H1 (cell line): ENCODE measurements at regions of chr20 and their contacts with region 1.

Region 1: GRCh38 chr20:49384437-49385088 is 97.9 kb downstream of the KCNB1 start:
- DNase-seq: peak; percentile 71 to 98
- H3K4me3 ChIP-seq: no peak overlapping the region
- H3K27ac ChIP-seq: no peak overlapping the region
- H3K4me1 ChIP-seq: peaks cover 2 to 8% (median 4%) of the 10 kb centered on the region in 4 experiments; a peak in 4 of 7 replicates
- H3K27me3 ChIP-seq: no peaks in the 10 kb centered on the region; a peak in 1 of 7 replicates
- CTCF ChIP-seq: peak; percentile 77 to 92 (median 89)
- EP300 ChIP-seq: no peak
- POLR2A ChIP-seq: no peak
- RAD21 ChIP-seq: peak; percentile 53 to 71

Region 2: DNA sequence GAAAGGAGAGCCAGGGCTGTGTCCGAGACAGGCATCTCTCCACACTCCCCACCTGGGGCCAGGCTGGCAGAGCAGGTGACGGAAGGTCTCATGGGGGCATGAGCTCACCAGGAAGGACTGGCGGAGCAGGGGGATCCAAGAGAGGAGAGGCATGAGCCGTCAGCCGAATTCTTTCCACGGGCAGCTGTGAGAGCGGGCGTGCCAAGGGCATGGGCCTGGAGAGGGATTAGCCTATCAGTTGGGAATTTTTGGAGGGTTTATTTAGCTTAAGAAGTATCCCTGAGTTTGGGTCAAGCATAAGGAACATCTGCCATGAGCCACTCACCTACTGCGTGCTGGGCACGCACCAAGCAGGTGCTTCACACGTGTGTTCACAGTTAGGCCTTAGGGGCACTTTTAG is 46.5 kb before region 1 on chr20:
- CTCF ChIA-PET with region 1: interaction called, 57 read pairs
- POLR2A ChIA-PET with region 1: interaction called, 3 read pairs
- DNase-seq: no peak
- H3K4me3 ChIP-seq: no peak overlapping the region
- H3K27ac ChIP-seq: no peak overlapping the region
- H3K4me1 ChIP-seq: no peaks in the 10 kb centered on the region
- H3K27me3 ChIP-seq: no peaks in the 10 kb centered on the region
- CTCF ChIP-seq: no peak
- EP300 ChIP-seq: no peak
- POLR2A ChIP-seq: no peak
- RAD21 ChIP-seq: no peak

Region 3: GRCh38 chr20:49367113-49367512 is 17.4 kb before region 1 on chr20:
- CTCF ChIA-PET with region 1: interaction called, 11 read pairs
- POLR2A ChIA-PET with region 1: interaction called, 4 read pairs
- DNase-seq: no peak
- H3K4me3 ChIP-seq: no peak overlapping the region
- H3K27ac ChIP-seq: no peak overlapping the region
- H3K4me1 ChIP-seq: no peaks in the 10 kb centered on the region; a peak in 1 of 7 replicates
- H3K27me3 ChIP-seq: 0 out of 7 replicates have a peak, but pooled peaks cover 0 to 1% (median 0%) of the 10 kb centered on the region in 4 experiments
- CTCF ChIP-seq: no peak
- EP300 ChIP-seq: no peak
- POLR2A ChIP-seq: no peak
- RAD21 ChIP-seq: no peak

Region 4: DNA sequence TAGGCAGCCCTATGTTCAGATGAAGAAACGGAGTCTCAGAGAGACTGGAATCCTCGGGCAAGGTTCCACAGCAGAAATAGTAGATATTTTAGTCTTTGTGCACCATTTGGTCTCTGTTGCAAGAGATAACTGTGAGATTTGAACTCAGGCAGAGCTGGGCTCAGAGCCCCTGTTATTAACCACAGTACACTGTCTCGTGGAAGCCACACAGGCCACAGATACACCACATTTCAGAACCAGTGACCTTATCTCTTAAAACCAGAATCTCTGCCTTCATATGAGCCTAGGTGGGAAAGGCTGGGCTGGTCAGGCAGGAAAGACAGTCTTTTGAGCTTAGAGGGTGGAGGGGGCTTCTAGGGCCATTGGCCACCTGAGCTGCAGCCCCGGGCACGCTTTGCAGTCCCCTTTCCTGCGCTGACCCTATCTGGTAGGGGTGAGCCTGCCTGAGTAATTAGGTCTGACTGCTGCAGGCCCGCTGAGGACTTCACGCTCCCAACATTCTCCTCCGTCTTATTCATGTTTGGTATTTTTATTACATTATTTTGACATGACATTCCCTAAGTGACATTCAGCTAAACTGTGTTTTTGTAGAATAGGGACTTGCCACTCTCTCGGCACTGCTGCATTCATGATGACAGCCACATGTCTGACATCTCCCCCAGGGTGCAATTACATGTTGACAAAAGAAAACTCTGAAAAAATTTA is 26.8 kb after region 1 on chr20:
- CTCF ChIA-PET with region 1: interaction called, 29 read pairs
- POLR2A ChIA-PET with region 1: no interaction called
- DNase-seq: no peak
- H3K4me3 ChIP-seq: no peak overlapping the region
- H3K27ac ChIP-seq: no peak overlapping the region
- H3K4me1 ChIP-seq: no peaks in the 10 kb centered on the region
- H3K27me3 ChIP-seq: no peaks in the 10 kb centered on the region
- CTCF ChIP-seq: no peak
- EP300 ChIP-seq: no peak
- POLR2A ChIP-seq: no peak
- RAD21 ChIP-seq: no peak

Region 5: DNA sequence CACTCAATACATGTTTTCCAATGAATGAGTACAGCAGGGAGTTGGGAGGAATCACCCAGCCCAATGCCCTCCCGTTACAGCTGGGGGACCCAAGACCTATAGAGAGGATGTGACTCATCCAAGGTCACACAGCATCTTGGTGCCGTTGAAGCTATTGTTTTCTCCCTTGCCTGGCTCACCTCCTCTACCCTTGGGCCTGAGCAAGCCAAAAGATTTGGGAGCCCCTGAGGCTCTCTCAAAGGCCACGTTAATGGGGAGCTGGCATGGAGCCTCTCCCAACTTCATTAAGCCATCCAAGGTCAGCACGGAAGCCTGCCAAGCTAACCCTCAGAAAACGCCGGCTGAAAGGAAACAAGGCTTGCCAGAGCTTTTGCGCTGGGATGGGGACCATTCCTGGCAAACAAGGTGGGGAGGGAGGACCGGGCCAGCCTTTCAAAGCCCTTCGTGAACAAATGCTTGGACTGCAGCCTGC is 67.5 kb after region 1 on chr20:
- CTCF ChIA-PET with region 1: interaction called, 15 read pairs
- POLR2A ChIA-PET with region 1: no interaction called
- DNase-seq: no peak
- H3K4me3 ChIP-seq: no peak overlapping the region
- H3K27ac ChIP-seq: no peak overlapping the region
- H3K4me1 ChIP-seq: peaks cover 10 to 18% (median 12%) of the 10 kb centered on the region in 4 experiments
- H3K27me3 ChIP-seq: no peaks in the 10 kb centered on the region; a peak in 1 of 7 replicates
- CTCF ChIP-seq: no peak
- EP300 ChIP-seq: no peak
- POLR2A ChIP-seq: no peak
- RAD21 ChIP-seq: no peak

Region 6: DNA sequence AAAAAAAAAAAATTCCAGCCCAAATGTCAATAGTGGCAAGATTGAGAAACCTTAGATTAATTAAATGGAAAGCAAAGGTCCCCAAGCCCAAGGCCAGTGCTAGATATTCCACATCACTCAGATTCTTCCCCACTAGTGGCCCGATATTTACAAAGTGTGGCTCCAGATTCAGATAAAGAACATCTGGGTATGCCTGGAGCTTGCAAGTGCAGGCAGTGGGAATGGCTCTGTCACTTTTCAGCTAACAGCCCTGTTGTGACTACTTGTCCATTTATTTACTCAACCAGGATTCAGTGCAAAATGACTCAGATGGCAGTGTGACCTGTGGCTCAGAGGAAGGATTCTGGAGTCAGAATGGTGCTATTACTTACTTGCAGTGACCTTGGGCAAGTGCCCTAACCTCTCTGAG is 106.1 kb after region 1 on chr20:
- CTCF ChIA-PET with region 1: interaction called, 70 read pairs
- POLR2A ChIA-PET with region 1: no interaction called
- DNase-seq: no peak
- H3K4me3 ChIP-seq: no peak overlapping the region
- H3K27ac ChIP-seq: no peak overlapping the region
- H3K4me1 ChIP-seq: no peaks in the 10 kb centered on the region
- H3K27me3 ChIP-seq: peaks cover 0 to 2% (median 0%) of the 10 kb centered on the region in 4 experiments; a peak in 3 of 7 replicates
- CTCF ChIP-seq: no peak
- EP300 ChIP-seq: no peak
- POLR2A ChIP-seq: no peak
- RAD21 ChIP-seq: no peak

Region 7: GRCh38 chr20:49541733-49542513 is 157.4 kb after region 1 on chr20:
- CTCF ChIA-PET with region 1: interaction called, 15 read pairs
- POLR2A ChIA-PET with region 1: no interaction called
- DNase-seq: peak in 1 of 2 experiments; percentile 86
- H3K4me3 ChIP-seq: no peak overlapping the region
- H3K27ac ChIP-seq: no peak overlapping the region
- H3K4me1 ChIP-seq: no peaks in the 10 kb centered on the region
- H3K27me3 ChIP-seq: no peaks in the 10 kb centered on the region
- CTCF ChIP-seq: peak; percentile 60 to 99 (median 90)
- EP300 ChIP-seq: no peak
- POLR2A ChIP-seq: no peak
- RAD21 ChIP-seq: peak; percentile 93 to 94

Region 8: DNA sequence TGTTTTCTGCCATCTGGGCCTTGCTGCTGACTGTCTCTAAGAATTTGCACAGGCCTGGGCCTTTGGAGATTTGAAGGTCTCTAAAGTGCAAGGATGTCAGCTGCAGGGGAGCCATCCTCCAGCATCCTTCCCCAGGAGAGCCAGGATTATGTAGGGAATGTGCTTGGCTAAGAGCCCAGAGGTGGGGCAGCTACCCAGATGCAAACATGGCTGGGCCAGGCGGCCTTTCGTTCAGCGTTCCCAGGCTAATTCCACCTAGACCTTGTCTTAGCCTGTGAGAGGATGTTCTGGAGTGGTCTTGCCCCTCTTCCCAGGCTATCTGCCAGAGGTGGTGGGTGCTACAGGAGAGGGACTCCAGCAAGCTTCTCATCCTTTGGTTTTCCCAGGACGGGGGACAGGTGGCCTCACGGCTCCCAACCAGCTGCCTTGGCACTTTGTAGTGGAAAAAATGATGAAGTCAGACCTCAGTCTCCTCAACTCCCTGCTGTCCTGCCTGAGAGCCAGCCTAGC is 191.0 kb after region 1 on chr20:
- CTCF ChIA-PET with region 1: no interaction called
- POLR2A ChIA-PET with region 1: no interaction called
- DNase-seq: no peak
- H3K4me3 ChIP-seq: no peak overlapping the region
- H3K27ac ChIP-seq: no peak overlapping the region
- H3K4me1 ChIP-seq: peaks cover 5 to 12% (median 7%) of the 10 kb centered on the region in 4 experiments
- H3K27me3 ChIP-seq: no peaks in the 10 kb centered on the region
- CTCF ChIP-seq: no peak
- EP300 ChIP-seq: no peak
- POLR2A ChIP-seq: no peak
- RAD21 ChIP-seq: no peak